ENCODE measurements at regions of chr15 and their contacts with region 1.

Region 1: DNA sequence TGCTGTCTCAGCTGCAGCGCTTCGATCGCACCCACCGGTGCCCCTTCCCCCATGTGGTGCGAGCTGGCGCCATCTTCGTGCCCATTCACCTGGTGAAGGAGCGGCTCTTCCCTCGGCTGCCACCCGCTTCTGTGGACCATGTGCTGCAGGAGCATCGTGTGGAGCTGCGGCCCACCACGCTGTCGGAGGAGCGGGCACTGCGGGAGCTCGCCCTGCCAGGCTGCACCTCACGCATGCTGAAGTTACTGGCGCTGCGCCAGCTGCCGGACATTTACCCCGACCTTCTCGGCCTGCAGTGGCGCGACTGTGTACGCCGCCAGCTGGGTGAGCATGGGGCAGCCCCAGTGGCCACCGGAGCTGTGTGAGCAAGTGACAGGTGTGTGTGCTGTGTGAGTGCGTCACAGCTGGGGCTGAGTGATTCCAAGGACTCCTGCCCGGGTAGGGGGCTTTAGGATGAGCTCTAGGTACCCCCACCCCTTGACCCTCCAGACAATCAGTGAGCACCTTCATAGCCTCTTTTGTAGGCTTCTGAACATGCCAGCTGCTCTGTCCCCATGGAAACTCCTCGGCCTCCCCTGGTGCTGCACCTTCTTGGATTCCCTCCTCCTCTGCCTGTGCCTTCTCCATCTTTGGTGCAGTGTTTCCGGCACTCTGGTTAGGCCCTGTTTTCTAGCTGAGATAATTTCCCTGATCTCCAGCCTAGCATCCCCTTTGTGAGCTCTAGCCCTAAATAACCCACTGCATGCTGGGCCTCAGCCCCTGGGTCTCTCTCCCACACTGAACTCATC is 7.0 kb downstream of the C15orf39 start:
- DNase-seq: no peak
- H3K4me3 Mint-ChIP-seq: no peak overlapping the region
- H3K27ac Mint-ChIP-seq: no peak overlapping the region
- H3K4me1 Mint-ChIP-seq: peaks cover 31% of the 10 kb centered on the region
- H3K27me3 Mint-ChIP-seq: no peaks in the 10 kb centered on the region

Region 2: GRCh38 chr15:74928771-74929198 is 279.9 kb before region 1 on chr15:
- CTCF ChIA-PET with region 1: no interaction called
- intact Hi-C with region 1: no loop called
- DNase-seq: no peak
- H3K4me3 Mint-ChIP-seq: no peak overlapping the region
- H3K27ac Mint-ChIP-seq: no peak overlapping the region
- H3K4me1 Mint-ChIP-seq: peaks cover 10% of the 10 kb centered on the region
- H3K27me3 Mint-ChIP-seq: no peaks in the 10 kb centered on the region

Region 3: DNA sequence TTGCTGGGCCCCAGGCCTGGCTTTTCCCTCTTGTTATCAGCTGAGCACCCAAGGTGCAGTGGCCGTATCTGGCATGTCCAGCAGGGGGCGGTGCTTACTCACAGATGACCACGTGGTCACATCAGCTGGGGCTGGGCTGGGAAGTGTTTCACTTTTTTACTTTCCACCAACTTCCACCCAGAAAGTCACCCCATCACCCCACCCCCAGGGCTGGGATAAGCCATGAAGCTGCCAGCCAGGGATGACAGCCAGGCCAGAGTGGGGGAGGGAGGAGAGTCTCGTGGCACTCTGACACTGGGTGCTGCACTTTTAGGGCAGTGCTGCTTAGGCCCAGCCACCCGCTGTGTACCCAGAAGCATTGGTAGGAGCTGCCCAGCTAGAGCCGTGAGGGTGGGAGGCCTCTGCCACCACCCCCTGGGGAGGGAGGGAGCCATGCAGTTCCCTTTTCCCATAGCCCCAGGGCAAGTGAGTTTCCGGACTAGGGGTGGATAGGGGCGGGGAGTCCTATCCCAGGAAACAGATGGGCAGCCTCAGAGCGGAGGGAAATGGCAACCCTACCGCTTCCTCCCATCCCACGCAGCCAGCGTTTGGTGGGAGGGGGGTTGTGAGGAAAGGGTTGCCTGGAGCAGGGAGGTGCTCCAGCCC is 179.2 kb before region 1 on chr15:
- CTCF ChIA-PET with region 1: interaction called, 38 read pairs
- intact Hi-C with region 1: loop called (anchors 1 kb)
- DNase-seq: peak; percentile 94
- H3K4me3 Mint-ChIP-seq: no peak overlapping the region
- H3K27ac Mint-ChIP-seq: no peak overlapping the region
- H3K4me1 Mint-ChIP-seq: peaks cover 23% of the 10 kb centered on the region
- H3K27me3 Mint-ChIP-seq: no peaks in the 10 kb centered on the region

Region 4: GRCh38 chr15:75397494-75397893 is 188.8 kb after region 1 on chr15:
- CTCF ChIA-PET with region 1: no interaction called
- intact Hi-C with region 1: no loop called
- DNase-seq: no peak
- H3K4me3 Mint-ChIP-seq: no peak overlapping the region
- H3K27ac Mint-ChIP-seq: no peak overlapping the region
- H3K4me1 Mint-ChIP-seq: peaks cover 5% of the 10 kb centered on the region
- H3K27me3 Mint-ChIP-seq: no peaks in the 10 kb centered on the region